IMR-90 (cell line): ENCODE measurements at regions of chr10 and their contacts with region 1.

Region 1: DNA sequence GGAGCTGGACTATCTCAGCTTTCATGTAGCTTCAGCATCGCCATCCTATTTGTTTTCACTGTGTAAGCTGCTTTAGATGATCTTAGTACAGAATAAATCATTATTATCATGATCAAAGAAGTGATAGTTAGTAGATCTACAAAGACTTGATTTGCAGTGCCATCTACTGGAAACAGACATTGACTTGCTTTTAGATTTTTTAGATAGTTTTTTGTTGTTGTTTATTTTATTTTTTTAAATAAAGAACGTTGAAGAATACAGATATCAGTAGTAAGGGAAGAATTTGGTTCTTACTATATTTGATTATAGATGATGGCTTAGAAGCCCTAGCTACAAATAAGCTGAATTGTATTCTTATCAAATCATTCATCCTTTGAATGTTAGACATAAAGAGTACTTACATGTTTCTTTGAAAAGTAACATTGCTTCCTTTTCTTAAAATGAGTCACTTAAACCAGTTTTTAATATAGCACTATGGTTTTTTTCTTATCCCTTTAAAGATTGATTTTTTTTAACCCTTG is 6.3 kb upstream of the SFMBT2 start:
- DNase-seq: peak; percentile 64
- ATAC-seq: peak; percentile 42; the same call in 1 of the 2 replicates
- H3K4me3 ChIP-seq: no peak overlapping the region
- H3K27ac ChIP-seq: no peak overlapping the region
- H3K4me1 ChIP-seq: no peaks in the 10 kb centered on the region
- H3K27me3 ChIP-seq: peaks cover 17% of the 10 kb centered on the region
- CTCF ChIP-seq: peak; percentile 69
- POLR2A ChIP-seq: no peak
- RAD21 ChIP-seq: peak; percentile 72

Region 2: GRCh38 chr10:6416892-6417512 is 1000.2 kb before region 1 on chr10:
- CTCF ChIA-PET with region 1: no interaction called
- POLR2A ChIA-PET with region 1: no interaction called
- dilution Hi-C with region 1: no loop called
- in situ Hi-C with region 1: loop called (anchors 10 kb)
- intact Hi-C with region 1: loop called (anchors 5 kb)
- DNase-seq: peak; percentile 57
- ATAC-seq: peak; percentile 89
- H3K4me3 ChIP-seq: no peak overlapping the region
- H3K27ac ChIP-seq: no peak overlapping the region
- H3K4me1 ChIP-seq: no peaks in the 10 kb centered on the region
- H3K27me3 ChIP-seq: peaks cover 15% of the 10 kb centered on the region
- CTCF ChIP-seq: peak; percentile 78
- POLR2A ChIP-seq: no peak
- RAD21 ChIP-seq: peak; percentile 78

Region 3: DNA sequence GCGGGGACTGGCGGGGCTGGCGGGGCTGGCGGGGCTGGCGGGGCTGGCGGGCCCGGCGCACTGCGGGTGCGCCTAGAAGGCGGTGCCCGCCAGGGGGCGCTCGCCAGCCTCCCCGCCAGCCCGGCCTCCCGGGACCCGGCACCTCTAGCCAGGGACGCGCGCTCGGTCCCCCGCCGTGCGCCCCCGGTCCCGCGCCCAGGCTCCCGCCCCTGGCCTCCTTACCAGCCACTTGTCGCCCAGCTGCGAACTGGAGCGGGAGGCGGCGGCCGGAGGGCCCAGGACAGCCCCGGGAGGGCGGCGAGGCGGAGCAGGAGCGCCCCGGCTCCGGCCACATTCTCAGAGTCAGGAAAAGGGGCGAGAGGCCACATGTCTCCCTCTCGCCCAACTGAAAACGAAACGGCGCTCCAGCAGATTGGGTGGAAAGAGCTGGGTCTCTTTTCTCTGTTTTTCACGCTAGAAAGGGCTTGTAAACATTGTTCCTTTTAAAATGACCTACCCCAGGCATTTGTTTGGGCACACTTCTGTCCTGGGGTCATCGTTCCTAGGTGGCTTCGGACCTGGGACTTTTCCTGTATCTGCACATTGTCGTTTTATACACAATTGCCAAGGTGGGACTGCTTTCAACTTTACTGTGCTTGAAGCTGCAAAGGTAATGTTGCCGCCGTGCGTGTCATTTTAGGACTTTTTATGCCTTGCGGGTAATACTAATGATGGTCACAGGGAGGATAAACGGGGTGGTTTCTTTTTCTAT is 836.7 kb before region 1 on chr10:
- CTCF ChIA-PET with region 1: interaction called, 3 read pairs
- POLR2A ChIA-PET with region 1: no interaction called
- dilution Hi-C with region 1: no loop called
- in situ Hi-C with region 1: no loop called
- intact Hi-C with region 1: loop called (anchors 5 kb)
- DNase-seq: peak; percentile 47
- ATAC-seq: peak; percentile 99
- H3K4me3 ChIP-seq: peak overlapping the region; percentile 80
- H3K27ac ChIP-seq: no peak overlapping the region; the same call in 1 of the 2 replicates
- H3K4me1 ChIP-seq: 0 out of 2 replicates have a peak, but pooled peaks cover 2% of the 10 kb centered on the region
- H3K27me3 ChIP-seq: peaks cover 18% of the 10 kb centered on the region
- CTCF ChIP-seq: peak; percentile 55
- POLR2A ChIP-seq: no peak
- RAD21 ChIP-seq: peak; percentile 36

Region 4: DNA sequence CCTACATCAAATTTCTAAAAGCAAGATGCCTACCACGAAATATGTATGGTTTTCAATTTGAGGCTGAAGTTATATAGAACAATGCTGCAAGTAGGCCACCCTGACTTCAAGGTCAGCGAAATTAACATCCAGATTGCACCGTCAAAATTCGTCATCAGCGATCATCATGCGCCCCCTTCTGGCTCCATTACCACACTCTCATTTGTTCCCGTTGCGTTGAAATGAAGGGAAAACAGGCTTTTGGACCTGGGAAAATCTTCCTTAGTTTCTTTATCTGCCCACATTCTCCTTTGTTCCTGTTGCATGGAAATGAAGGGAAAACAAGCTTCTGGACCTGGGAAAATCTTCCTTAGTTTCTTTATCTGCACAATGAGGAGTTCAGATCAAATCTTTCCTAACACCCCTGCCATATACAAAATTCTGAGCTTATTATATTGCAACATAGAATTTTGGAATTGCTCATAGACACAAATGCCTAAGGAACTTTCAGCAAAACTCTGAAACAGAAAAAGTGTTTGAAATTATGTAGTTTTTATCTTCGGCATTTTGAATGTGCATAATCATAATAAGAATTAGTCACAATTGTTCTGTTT is 738.9 kb before region 1 on chr10:
- CTCF ChIA-PET with region 1: interaction called, 5 read pairs
- POLR2A ChIA-PET with region 1: no interaction called
- dilution Hi-C with region 1: loop called (anchors 25 kb)
- in situ Hi-C with region 1: loop called (anchors 5 kb)
- intact Hi-C with region 1: no loop called
- DNase-seq: peak; percentile 29
- ATAC-seq: peak; percentile 63; the same call in 1 of the 2 replicates
- H3K4me3 ChIP-seq: no peak overlapping the region
- H3K27ac ChIP-seq: no peak overlapping the region
- H3K4me1 ChIP-seq: no peaks in the 10 kb centered on the region
- H3K27me3 ChIP-seq: no peaks in the 10 kb centered on the region
- CTCF ChIP-seq: peak; percentile 57
- POLR2A ChIP-seq: no peak
- RAD21 ChIP-seq: peak; percentile 56

Region 5: DNA sequence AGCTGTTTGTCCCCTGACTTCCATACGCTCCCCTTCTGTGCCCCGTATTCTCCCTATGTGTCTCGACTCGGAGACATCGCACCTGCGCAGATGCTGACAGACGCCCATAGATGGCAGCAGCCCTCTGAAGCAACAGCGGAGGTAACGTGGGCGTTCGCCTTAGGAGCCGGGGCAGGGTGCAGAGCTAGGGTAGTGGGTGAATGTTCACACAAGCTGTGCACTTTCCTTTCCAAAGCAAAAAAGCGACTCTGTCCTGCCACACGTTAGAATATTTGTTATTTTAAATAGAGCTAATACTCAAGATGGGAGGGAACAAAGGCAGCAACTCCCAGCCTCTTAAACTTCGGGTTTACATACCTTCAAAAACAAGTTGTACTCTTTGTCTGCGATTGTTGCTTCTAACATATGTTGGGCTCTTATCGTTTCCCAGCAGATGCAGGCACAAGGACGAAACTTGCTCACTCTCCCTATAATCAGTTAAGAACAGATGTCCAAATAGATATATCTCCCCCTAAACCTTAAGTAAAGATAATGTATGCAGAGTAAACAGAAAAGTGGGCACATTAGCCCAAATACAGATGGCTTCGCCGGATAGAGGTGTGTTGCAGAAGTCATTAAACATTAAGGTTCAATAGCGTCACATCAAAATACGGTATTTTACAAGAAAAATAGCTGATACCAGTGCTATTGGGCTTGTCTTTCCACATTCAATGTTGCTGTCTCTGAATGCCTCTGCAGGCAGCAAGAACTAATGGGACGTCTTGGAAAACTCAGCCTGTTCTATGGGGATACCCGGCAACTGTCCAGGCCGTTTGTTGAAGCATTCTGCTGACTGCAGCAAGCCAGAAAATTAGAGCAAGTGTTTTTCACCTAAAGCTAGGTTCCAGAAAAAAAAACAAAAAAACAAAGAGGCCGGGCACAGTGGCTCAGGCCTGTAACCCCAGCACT is 496.8 kb before region 1 on chr10:
- CTCF ChIA-PET with region 1: no interaction called
- POLR2A ChIA-PET with region 1: no interaction called
- dilution Hi-C with region 1: no loop called
- in situ Hi-C with region 1: no loop called
- intact Hi-C with region 1: loop called (anchors 5 kb)
- DNase-seq: peak; percentile 28
- ATAC-seq: peak; percentile 54
- H3K4me3 ChIP-seq: no peak overlapping the region
- H3K27ac ChIP-seq: no peak overlapping the region
- H3K4me1 ChIP-seq: no peaks in the 10 kb centered on the region
- H3K27me3 ChIP-seq: peaks cover 4% of the 10 kb centered on the region; the same call in 1 of the 2 replicates
- CTCF ChIP-seq: peak; percentile 42
- POLR2A ChIP-seq: no peak
- RAD21 ChIP-seq: peak; percentile 56

Region 6: GRCh38 chr10:9302120-9302746 is 1885.1 kb after region 1 on chr10:
- CTCF ChIA-PET with region 1: no interaction called
- POLR2A ChIA-PET with region 1: no interaction called
- dilution Hi-C with region 1: no loop called
- in situ Hi-C with region 1: no loop called
- intact Hi-C with region 1: loop called (anchors 5 kb)
- DNase-seq: peak; percentile 53
- ATAC-seq: peak; percentile 62
- H3K4me3 ChIP-seq: no peak overlapping the region
- H3K27ac ChIP-seq: no peak overlapping the region
- H3K4me1 ChIP-seq: no peaks in the 10 kb centered on the region
- H3K27me3 ChIP-seq: no peaks in the 10 kb centered on the region
- CTCF ChIP-seq: peak; percentile 50
- POLR2A ChIP-seq: no peak
- RAD21 ChIP-seq: peak; percentile 54